ENCODE measurements at regions of chr2 and their contacts with region 1.

Region 1: GRCh38 chr2:18560031-18560796 is at the start of gene RDH14:
- DNase-seq: peak; percentile 83 to 93 (median 92)
- ATAC-seq: peak; percentile 94
- H3K4me3 ChIP-seq: peak within 1 kb of the TSS; percentile 71
- H3K4me3 Mint-ChIP-seq: peak within 1 kb of the TSS; percentile 86 to 96 (median 92)
- H3K27ac ChIP-seq: peak within 1 kb of the TSS; percentile 94
- H3K27ac Mint-ChIP-seq: peak within 1 kb of the TSS; percentile 92 to 98 (median 96)
- H3K4me1 ChIP-seq: peaks cover 6 to 16% of the 10 kb centered on the region in 2 donors
- H3K4me1 Mint-ChIP-seq: peaks cover 19 to 66% (median 52%) of the 10 kb centered on the region in 7 donors
- H3K27me3 ChIP-seq: no peaks in the 10 kb centered on the region
- H3K27me3 Mint-ChIP-seq: no peaks in the 10 kb centered on the region
- total RNA-seq, gene RDH14: 9.4 to 20.9 (median 14.9) TPM

Region 2: GRCh38 chr2:17753803-17754663 is 806.2 kb before region 1 on chr2 and contains the starts of genes GEN1 and SMC6:
- CTCF ChIA-PET with region 1: no interaction called
- POLR2A ChIA-PET with region 1: no interaction called
- intact Hi-C with region 1: loop called (anchors 1 kb)
- DNase-seq: peak; percentile 84 to 98 (median 94)
- ATAC-seq: peak; percentile 91
- H3K4me3 ChIP-seq: peak within 1 kb of the TSS; percentile 89
- H3K4me3 Mint-ChIP-seq: peak within 1 kb of the TSS; percentile 82 to 94 (median 90)
- H3K27ac ChIP-seq: peak within 1 kb of the TSS; percentile 99
- H3K27ac Mint-ChIP-seq: peak within 1 kb of the TSS; percentile 84 to 98 (median 96)
- H3K4me1 ChIP-seq: peaks cover 0 to 10% of the 10 kb centered on the region in 2 donors
- H3K4me1 Mint-ChIP-seq: peaks cover 13 to 48% (median 29%) of the 10 kb centered on the region in 7 donors
- H3K27me3 ChIP-seq: no peaks in the 10 kb centered on the region
- H3K27me3 Mint-ChIP-seq: no peaks in the 10 kb centered on the region
- total RNA-seq, gene GEN1: 5.6 to 25.8 (median 8.0) TPM
- total RNA-seq, gene SMC6: 7.9 to 35.6 (median 14.6) TPM

Region 3: GRCh38 chr2:18545384-18545783 is 14.8 kb before region 1 on chr2:
- CTCF ChIA-PET with region 1: interaction called, 5 read pairs
- POLR2A ChIA-PET with region 1: interaction called, 8 read pairs
- intact Hi-C with region 1: loop called in 1 of 2 experiments (anchors 2 kb)
- DNase-seq: no peak
- ATAC-seq: no peak
- H3K4me3 ChIP-seq: no peak overlapping the region
- H3K4me3 Mint-ChIP-seq: peak overlapping the region in 3 of 10 donors; percentile 10 to 33 (median 12)
- H3K27ac ChIP-seq: no peak overlapping the region
- H3K27ac Mint-ChIP-seq: peak overlapping the region in 1 of 9 donors; percentile 66
- H3K4me1 ChIP-seq: peaks cover 8 to 11% of the 10 kb centered on the region in 2 donors
- H3K4me1 Mint-ChIP-seq: peaks cover 12 to 57% (median 47%) of the 10 kb centered on the region in 7 donors
- H3K27me3 ChIP-seq: no peaks in the 10 kb centered on the region
- H3K27me3 Mint-ChIP-seq: peaks cover 0 to 6% (median 3%) of the 10 kb centered on the region in 5 donors

Region 4: GRCh38 chr2:19474128-19474527 is 913.9 kb after region 1 on chr2:
- CTCF ChIA-PET with region 1: no interaction called
- POLR2A ChIA-PET with region 1: no interaction called
- intact Hi-C with region 1: loop called (anchors 5 kb)
- DNase-seq: peak in 8 of 9 donors; percentile 30 to 84 (median 75)
- ATAC-seq: peak; percentile 95
- H3K4me3 ChIP-seq: no peak overlapping the region
- H3K4me3 Mint-ChIP-seq: peak overlapping the region; percentile 24 to 75 (median 56)
- H3K27ac ChIP-seq: no peak overlapping the region
- H3K27ac Mint-ChIP-seq: peak overlapping the region in 7 of 9 donors; percentile 14 to 84 (median 22)
- H3K4me1 ChIP-seq: peaks cover 8 to 19% of the 10 kb centered on the region in 2 donors
- H3K4me1 Mint-ChIP-seq: peaks cover 11 to 32% (median 25%) of the 10 kb centered on the region in 7 donors
- H3K27me3 ChIP-seq: no peaks in the 10 kb centered on the region
- H3K27me3 Mint-ChIP-seq: peaks cover 33 to 66% (median 43%) of the 10 kb centered on the region in 5 donors

Region 5: DNA sequence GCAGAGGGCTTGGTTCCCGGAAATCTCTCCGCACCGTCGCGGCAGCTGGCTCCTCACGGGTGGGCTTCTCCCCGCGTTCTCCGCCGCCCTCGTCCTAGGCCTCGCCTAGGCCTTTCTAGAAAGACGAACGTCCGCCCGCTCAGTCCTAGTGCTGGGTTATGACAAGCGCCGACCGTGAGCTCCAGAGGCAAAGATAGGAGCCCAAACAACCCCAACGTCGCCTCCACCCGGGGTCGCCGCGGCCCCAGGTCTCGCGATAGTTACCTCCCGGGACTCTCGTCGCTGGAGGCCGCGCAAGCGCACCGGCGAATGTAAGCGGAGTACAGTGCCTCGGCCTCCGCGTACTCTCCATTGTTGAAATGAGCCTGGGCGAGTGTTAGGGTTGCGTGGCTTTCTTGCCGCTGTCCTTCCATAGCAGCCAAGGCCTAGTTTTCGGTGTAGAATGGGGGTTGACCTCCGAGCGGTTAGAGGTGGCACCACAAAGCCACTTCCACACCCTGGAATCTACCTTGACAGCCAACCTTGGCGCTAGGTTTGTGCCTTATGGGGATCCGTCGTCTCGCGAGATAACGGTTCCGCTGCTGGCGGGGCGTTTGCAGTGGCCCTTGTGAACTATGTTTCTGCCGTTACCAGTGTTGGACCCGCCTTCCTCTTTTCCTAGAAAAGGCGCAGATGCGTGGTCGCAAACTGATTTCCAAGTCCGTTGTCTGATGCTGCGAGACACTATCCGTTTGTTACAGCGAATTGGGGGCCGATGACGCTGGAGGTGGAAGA is 1341.4 kb after region 1 on chr2 and contains the start of gene TTC32:
- CTCF ChIA-PET with region 1: no interaction called
- POLR2A ChIA-PET with region 1: interaction called, 4 read pairs
- intact Hi-C with region 1: loop called (anchors 1 kb)
- DNase-seq: peak; percentile 90 to 98 (median 96)
- ATAC-seq: peak; percentile 91
- H3K4me3 ChIP-seq: peak within 1 kb of the TSS; percentile 95
- H3K4me3 Mint-ChIP-seq: peak within 1 kb of the TSS; percentile 84 to 99 (median 96)
- H3K27ac ChIP-seq: peak within 1 kb of the TSS; percentile 83
- H3K27ac Mint-ChIP-seq: peak within 1 kb of the TSS; percentile 93 to 100 (median 99)
- H3K4me1 ChIP-seq: peaks cover 15 to 23% of the 10 kb centered on the region in 2 donors
- H3K4me1 Mint-ChIP-seq: peaks cover 24 to 35% (median 31%) of the 10 kb centered on the region in 7 donors
- H3K27me3 ChIP-seq: no peaks in the 10 kb centered on the region
- H3K27me3 Mint-ChIP-seq: peaks cover 8 to 19% (median 13%) of the 10 kb centered on the region in 5 donors
- total RNA-seq, gene TTC32: 23.1 to 58.0 (median 44.9) TPM

Measured in naive thymus-derived CD4-positive, alpha-beta T cell (primary cell).